ENCODE measurements at regions of chr1 and their contacts with region 1.

Region 1: DNA sequence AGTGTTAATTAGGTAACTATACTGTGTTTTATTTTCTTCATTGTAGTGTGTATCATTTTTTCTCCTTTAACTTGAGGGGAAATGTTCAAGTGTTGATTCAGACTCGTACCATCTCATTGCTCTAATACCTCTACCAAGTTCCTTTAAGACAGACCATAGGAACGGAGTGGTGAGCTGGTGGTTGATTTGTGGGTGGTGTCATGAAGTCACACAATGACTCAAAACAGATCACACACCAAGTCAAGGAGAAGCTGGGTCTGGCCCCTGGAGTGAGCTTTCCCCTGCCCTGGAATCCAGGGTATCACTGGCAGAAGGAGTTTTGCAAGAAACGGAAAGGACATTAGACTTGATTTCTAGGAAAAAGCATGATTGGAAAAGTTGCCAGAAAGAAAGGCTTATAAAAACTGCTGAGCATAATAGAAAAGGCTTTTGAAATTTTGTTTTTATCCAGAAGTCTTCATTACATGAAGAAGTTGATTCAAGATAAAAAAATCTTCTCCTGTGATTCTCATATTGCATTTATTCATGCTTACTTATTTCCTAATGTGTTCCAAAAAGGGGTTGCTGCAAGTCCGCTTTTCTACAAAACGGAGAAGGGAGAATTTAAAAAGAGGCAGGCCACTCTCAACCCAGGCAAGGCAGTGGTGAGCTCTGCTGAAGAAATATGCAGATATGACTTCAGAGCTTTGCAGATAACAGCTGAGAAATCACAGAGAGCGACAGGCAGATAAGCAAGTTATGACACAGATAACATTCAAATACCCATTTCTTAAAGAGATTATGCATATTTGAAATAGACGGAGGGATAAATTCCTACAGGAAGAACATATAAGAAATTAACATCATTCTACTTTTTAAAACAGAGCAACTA is 79.7 kb downstream of the TBX19 start:
- DNase-seq: peak in 1 of 5 donors; percentile 55
- H3K4me3 ChIP-seq: no peak overlapping the region
- H3K4me3 Mint-ChIP-seq: peak overlapping the region in 3 of 8 donors; percentile 25 to 48 (median 36)
- H3K27ac ChIP-seq: no peak overlapping the region
- H3K27ac Mint-ChIP-seq: peak overlapping the region in 5 of 7 donors; percentile 79 to 100 (median 90)
- H3K4me1 ChIP-seq: peaks cover 49% of the 10 kb centered on the region
- H3K4me1 Mint-ChIP-seq: peaks cover 27 to 55% (median 44%) of the 10 kb centered on the region in 4 donors
- H3K27me3 ChIP-seq: no peaks in the 10 kb centered on the region
- H3K27me3 Mint-ChIP-seq: no peaks in the 10 kb centered on the region

Region 2: GRCh38 chr1:168373869-168374268 is 13.5 kb after region 1 on chr1:
- CTCF ChIA-PET with region 1: interaction called, 10 read pairs
- POLR2A ChIA-PET with region 1: interaction called, 3 read pairs
- intact Hi-C with region 1: no loop called
- DNase-seq: no peak
- H3K4me3 ChIP-seq: no peak overlapping the region
- H3K4me3 Mint-ChIP-seq: no peak overlapping the region
- H3K27ac ChIP-seq: no peak overlapping the region
- H3K27ac Mint-ChIP-seq: no peak overlapping the region
- H3K4me1 ChIP-seq: no peaks in the 10 kb centered on the region
- H3K4me1 Mint-ChIP-seq: peaks cover 0 to 9% (median 5%) of the 10 kb centered on the region in 4 donors
- H3K27me3 ChIP-seq: no peaks in the 10 kb centered on the region
- H3K27me3 Mint-ChIP-seq: no peaks in the 10 kb centered on the region